HEK293 (cell line): ENCODE measurements at regions of chr18 and their contacts with region 1.

Region 1: DNA sequence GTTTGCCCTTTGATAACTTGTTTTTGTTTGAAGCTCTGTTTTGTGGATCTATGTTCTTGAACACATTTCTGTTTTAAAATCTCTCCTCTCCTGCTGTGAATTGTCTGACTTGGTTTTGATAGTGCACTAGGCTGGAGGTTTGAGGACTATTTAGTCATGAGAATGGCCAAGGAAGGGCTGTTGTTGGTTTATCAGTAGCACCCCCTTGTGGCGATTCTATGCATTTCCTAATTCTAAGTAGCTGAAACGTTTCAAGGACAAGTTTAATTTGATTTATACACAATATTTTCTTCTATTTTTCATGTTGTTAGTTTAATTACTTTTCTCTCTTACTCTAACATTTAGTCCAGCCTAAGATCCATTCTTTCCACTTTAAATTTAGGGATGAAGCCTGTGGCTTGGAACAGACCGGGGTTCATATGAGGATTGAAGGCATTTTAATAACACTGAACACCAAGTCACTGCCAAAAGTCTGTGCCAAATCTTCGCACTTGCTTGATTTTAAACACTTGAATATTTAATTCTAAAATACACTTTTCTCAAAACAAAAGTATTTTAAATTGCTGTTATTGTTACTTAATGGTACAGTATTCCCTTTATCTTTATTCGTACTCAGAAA is 166.0 kb downstream of the SOCS6 start:
- H3K4me3 ChIP-seq: no peak overlapping the region
- H3K27ac ChIP-seq: no peak overlapping the region
- H3K4me1 ChIP-seq: no peaks in the 10 kb centered on the region
- CTCF ChIP-seq: peak; percentile 56

Region 2: DNA sequence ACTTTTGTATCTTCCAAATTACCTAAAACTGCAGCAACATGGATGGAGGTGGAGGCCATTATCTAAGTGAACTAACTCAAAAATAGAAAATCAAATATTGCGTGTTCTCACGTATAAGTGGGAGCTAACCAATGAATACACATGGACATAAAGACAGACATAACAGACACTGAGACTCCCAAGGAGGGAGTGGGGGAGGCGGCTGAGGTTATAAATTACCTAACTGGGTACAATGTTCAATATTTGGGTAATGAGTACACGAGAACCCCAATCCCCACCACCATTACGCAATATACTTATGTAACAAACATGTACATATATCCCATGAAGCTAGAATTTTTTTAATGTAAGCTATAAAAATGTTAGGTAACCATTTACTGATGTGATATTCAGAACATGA is 369.2 kb before region 1 on chr18:
- CTCF ChIA-PET with region 1: interaction called, 14 read pairs
- POLR2A ChIA-PET with region 1: no interaction called
- H3K4me3 ChIP-seq: no peak overlapping the region
- H3K27ac ChIP-seq: no peak overlapping the region
- H3K4me1 ChIP-seq: no peaks in the 10 kb centered on the region
- CTCF ChIP-seq: no peak

Region 3: GRCh38 chr18:70195852-70196434 is 258.9 kb before region 1 on chr18:
- CTCF ChIA-PET with region 1: interaction called, 208 read pairs
- POLR2A ChIA-PET with region 1: no interaction called
- H3K4me3 ChIP-seq: no peak overlapping the region
- H3K27ac ChIP-seq: no peak overlapping the region
- H3K4me1 ChIP-seq: no peaks in the 10 kb centered on the region
- CTCF ChIP-seq: peak; percentile 46; the same call in 1 of the 2 replicates

Region 4: DNA sequence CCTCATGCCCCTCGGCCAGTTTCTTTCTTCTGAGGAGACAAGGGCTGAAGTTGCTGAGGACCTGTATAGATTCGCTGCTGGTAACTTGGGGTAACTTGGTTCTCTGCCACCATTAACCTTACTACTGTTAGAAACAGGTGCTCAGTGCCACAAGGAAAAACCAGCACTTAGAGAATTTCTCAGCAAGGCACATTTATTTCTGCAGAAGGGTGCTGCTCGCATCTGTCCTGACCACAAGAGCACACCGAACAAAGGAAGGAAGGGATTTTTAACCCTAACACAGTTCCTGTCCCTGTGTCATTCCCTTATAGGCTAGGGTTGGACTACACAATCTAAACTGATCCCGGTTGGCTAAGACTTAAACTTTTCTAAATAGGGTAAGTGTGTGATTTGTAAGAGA is 11.9 kb before region 1 on chr18:
- CTCF ChIA-PET with region 1: interaction called, 11 read pairs
- POLR2A ChIA-PET with region 1: no interaction called
- H3K4me3 ChIP-seq: no peak overlapping the region
- H3K27ac ChIP-seq: no peak overlapping the region
- H3K4me1 ChIP-seq: no peaks in the 10 kb centered on the region
- CTCF ChIP-seq: no peak